Breast epithelium (tissue), 4 donors: ENCODE measurements at regions of chr4 and their contacts with region 1.

Region 1: DNA sequence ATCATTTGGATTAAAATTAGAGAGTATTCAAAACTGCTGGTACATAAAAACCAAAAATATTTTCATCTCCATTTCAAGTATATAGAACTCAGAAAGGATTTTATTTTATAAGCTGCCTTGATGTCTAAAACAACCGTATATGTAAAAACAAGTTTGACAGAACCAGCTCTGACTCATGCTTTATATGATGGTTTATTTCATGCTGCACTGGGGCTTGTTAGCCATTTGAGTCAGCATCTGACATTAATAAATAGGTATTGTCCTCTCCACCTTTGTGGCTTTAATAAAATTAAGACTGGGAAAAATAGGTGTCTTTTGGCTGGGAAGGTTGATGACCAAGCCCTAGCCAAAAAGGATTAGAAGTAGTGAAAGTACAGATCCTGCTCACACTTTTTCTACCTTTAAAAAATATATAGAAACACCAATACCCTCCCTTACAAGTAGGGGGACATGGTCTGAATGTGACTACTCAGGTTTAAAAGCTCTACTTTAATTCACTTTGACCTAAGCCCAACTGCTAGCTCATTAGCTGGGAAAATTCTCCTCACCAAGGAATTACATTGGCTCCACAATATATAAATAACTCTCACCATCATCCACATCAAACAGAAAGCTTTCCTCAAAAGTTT is 228.1 kb downstream of the ADAMTS3 start:
- DNase-seq: no peak
- H3K4me3 ChIP-seq: no peak overlapping the region
- H3K27ac ChIP-seq: no peak overlapping the region
- H3K4me1 ChIP-seq: no peaks in the 10 kb centered on the region
- H3K27me3 ChIP-seq: no peaks in the 10 kb centered on the region
- CTCF ChIP-seq: no peak
- POLR2A ChIP-seq: no peak

Region 2: GRCh38 chr4:73335679-73336078 is 994.8 kb after region 1 on chr4:
- intact Hi-C with region 1: loop called (anchors 10 kb)
- DNase-seq: no peak
- H3K4me3 ChIP-seq: no peak overlapping the region
- H3K27ac ChIP-seq: no peak overlapping the region
- H3K4me1 ChIP-seq: no peaks in the 10 kb centered on the region
- H3K27me3 ChIP-seq: no peaks in the 10 kb centered on the region
- CTCF ChIP-seq: no peak
- POLR2A ChIP-seq: no peak